ENCODE measurements at regions of chr14 and their contacts with region 1.

Region 1: GRCh38 chr14:69475194-69475818 is 9.2 kb upstream of the PLEKHD1 start:
- DNase-seq: no peak
- H3K4me3 ChIP-seq: no peak overlapping the region
- CTCF ChIP-seq: no peak

Region 2: DNA sequence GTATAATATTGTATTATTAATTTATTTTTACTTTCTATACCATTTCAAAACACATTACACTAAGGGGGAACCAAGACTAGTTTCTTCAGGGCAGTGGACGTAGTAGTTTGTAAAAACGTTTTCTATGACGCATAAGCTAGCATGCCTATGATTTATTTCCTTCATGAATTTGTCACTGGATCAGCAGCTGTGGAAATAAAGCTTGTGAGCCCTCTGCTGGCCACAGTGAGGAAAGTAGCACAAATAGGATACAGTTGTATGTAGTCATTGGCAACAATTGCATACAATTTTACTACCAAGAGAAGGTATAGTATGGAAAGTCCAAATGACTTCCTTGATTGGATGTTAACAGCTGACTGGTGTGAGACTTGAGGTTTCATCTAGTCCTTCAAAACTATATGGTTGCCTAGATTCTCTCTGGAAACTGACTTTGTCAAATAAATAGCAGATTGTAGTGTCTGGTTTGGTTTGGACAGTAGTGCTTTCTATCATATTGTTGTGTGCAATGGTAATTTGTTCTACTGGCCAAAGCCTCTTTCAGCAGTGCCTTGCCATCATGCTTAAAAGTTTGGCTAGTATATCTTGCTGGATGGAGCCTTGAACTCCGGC is 15.1 kb before region 1 on chr14:
- CTCF ChIA-PET with region 1: interaction called, 14 read pairs
- POLR2A ChIA-PET with region 1: no interaction called
- DNase-seq: peak; percentile 44
- H3K4me3 ChIP-seq: no peak overlapping the region
- CTCF ChIP-seq: peak; percentile 71

Region 3: GRCh38 chr14:69487226-69487625 is 11.9 kb after region 1 on chr14:
- CTCF ChIA-PET with region 1: interaction called, 12 read pairs
- POLR2A ChIA-PET with region 1: no interaction called
- DNase-seq: no peak
- H3K4me3 ChIP-seq: no peak overlapping the region
- CTCF ChIP-seq: no peak

Measured in AG04449 (cell line).